T-cell (primary cell): ENCODE measurements at regions of chr14 and their contacts with region 1.

Region 1: GRCh38 chr14:96445844-96446710 is 54.1 kb downstream of the AK7 start:
- DNase-seq: no peak
- ATAC-seq: no peak
- H3K4me3 ChIP-seq: no peak overlapping the region
- H3K4me3 Mint-ChIP-seq: no peak overlapping the region
- H3K27ac ChIP-seq: no peak overlapping the region
- H3K27ac Mint-ChIP-seq: no peak overlapping the region
- H3K4me1 ChIP-seq: no peaks in the 10 kb centered on the region
- H3K4me1 Mint-ChIP-seq: no peaks in the 10 kb centered on the region
- H3K27me3 ChIP-seq: peaks cover 0 to 5% of the 10 kb centered on the region in 2 experiments
- H3K27me3 Mint-ChIP-seq: peaks cover 0 to 9% of the 10 kb centered on the region in 2 donors

Region 2: DNA sequence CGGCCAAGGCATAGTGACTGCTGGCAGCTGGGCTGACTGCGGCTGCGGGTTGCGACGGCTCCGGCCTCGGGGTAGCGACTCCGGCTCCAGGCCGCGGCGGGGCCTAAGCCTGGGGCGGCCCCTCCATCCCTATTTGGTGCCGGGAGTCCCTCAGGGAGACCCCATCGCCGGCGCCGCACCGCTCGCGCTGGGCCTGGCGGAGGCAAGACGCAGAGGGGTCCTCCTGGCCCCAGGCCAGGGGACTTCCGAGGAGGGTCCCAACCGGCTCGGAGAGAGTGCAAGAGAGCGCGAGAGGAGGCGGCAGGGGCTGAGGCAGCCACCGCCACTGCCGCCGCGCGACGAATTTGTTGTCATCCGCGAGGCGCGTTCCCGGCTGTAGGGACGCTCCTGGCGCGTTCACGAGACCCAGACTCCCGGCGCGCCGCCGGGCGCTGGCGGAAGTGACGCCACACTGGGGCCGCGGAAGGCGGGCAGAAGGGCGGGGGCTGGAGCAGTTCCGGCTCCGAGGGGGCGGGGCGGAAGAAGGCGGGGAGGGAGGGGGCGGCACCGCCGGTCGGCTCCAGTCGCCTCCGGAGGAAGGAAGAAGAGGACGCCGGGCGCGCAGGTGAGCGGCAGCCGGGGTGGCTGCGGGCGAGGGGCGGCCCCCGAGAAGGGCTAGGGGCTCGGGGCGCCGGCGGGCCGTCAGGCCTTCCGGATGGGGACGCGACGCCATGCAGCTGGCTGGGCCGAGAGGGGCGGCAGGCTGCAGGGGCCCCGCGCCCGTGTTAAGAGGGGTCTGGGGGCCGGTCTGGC is 82.9 kb before region 1 on chr14 and contains the starts of genes ATG2B and GSKIP:
- CTCF ChIA-PET with region 1: no interaction called
- POLR2A ChIA-PET with region 1: no interaction called
- DNase-seq: peak; percentile 91 to 99 (median 96)
- ATAC-seq: peak; percentile 83 to 88 (median 86)
- H3K4me3 ChIP-seq: peak within 1 kb of the TSS; percentile 90 to 100
- H3K4me3 Mint-ChIP-seq: peak within 1 kb of the TSS; percentile 86 to 89 (median 86)
- H3K27ac ChIP-seq: peak within 1 kb of the TSS; percentile 92
- H3K27ac Mint-ChIP-seq: peak within 1 kb of the TSS; percentile 81 to 85
- H3K4me1 ChIP-seq: peaks cover 24 to 37% of the 10 kb centered on the region in 2 experiments
- H3K4me1 Mint-ChIP-seq: peaks cover 55 to 71% (median 59%) of the 10 kb centered on the region in 3 donors
- H3K27me3 ChIP-seq: no peaks in the 10 kb centered on the region
- H3K27me3 Mint-ChIP-seq: no peaks in the 10 kb centered on the region
- total RNA-seq, gene ATG2B: 27.7 to 37.3 (median 31.5) TPM
- total RNA-seq, gene GSKIP: 5.9 to 18.8 (median 15.0) TPM

Region 3: DNA sequence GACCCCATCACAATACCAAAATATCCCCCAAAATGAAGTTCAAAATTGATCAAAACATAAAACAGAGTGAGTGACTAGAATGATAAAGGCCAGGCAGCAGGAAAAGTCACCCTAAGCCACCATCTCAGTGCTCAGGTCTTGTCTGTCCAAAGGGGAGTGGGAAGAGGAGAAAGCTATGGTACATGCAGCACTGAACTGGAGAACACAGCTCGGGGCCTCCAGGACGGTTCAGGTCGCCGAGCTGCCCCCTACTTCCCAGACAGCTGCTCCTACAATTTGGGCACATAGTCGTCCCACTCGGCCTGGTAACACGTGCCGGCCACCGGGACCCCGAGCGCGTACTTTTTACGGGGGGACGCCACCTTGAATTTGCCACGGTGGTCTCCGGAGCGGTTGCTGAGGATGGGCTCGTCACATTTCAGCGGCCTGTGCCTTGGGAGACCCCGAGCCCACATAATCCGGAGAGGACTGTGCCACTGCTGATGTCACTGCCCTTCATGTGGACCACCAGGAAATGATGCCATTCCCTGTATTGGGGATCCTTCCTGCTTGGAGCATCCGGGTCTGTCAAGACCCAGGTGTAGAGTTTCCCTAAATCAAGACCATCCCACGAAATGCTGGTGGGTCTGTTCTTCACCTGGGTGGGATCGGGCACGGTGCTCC is 22.5 kb before region 1 on chr14:
- CTCF ChIA-PET with region 1: no interaction called
- POLR2A ChIA-PET with region 1: no interaction called
- DNase-seq: peak in 1 of 35 experiments; percentile 5
- ATAC-seq: no peak
- H3K4me3 ChIP-seq: peak overlapping the region in 1 of 2 donors; percentile 66
- H3K4me3 Mint-ChIP-seq: peak overlapping the region; percentile 16 to 63 (median 49)
- H3K27ac ChIP-seq: no peak overlapping the region
- H3K27ac Mint-ChIP-seq: no peak overlapping the region
- H3K4me1 ChIP-seq: peaks cover 3 to 8% of the 10 kb centered on the region in 2 experiments
- H3K4me1 Mint-ChIP-seq: peaks cover 0 to 5% (median 4%) of the 10 kb centered on the region in 3 donors
- H3K27me3 ChIP-seq: peaks cover 0 to 9% of the 10 kb centered on the region in 2 experiments
- H3K27me3 Mint-ChIP-seq: peaks cover 0 to 4% of the 10 kb centered on the region in 2 donors

Region 4: GRCh38 chr14:96434040-96434787 is 11.9 kb before region 1 on chr14:
- CTCF ChIA-PET with region 1: interaction called in 1 of 2 experiments, 10 read pairs
- POLR2A ChIA-PET with region 1: no interaction called
- DNase-seq: no peak
- ATAC-seq: no peak
- H3K4me3 ChIP-seq: no peak overlapping the region
- H3K4me3 Mint-ChIP-seq: no peak overlapping the region
- H3K27ac ChIP-seq: no peak overlapping the region
- H3K27ac Mint-ChIP-seq: no peak overlapping the region
- H3K4me1 ChIP-seq: no peaks in the 10 kb centered on the region
- H3K4me1 Mint-ChIP-seq: no peaks in the 10 kb centered on the region
- H3K27me3 ChIP-seq: peaks cover 0 to 14% of the 10 kb centered on the region in 2 experiments
- H3K27me3 Mint-ChIP-seq: peaks cover 22 to 36% of the 10 kb centered on the region in 2 donors